IMR-90 (cell line): ENCODE measurements at regions of chr1 and their contacts with region 1.

Region 1: DNA sequence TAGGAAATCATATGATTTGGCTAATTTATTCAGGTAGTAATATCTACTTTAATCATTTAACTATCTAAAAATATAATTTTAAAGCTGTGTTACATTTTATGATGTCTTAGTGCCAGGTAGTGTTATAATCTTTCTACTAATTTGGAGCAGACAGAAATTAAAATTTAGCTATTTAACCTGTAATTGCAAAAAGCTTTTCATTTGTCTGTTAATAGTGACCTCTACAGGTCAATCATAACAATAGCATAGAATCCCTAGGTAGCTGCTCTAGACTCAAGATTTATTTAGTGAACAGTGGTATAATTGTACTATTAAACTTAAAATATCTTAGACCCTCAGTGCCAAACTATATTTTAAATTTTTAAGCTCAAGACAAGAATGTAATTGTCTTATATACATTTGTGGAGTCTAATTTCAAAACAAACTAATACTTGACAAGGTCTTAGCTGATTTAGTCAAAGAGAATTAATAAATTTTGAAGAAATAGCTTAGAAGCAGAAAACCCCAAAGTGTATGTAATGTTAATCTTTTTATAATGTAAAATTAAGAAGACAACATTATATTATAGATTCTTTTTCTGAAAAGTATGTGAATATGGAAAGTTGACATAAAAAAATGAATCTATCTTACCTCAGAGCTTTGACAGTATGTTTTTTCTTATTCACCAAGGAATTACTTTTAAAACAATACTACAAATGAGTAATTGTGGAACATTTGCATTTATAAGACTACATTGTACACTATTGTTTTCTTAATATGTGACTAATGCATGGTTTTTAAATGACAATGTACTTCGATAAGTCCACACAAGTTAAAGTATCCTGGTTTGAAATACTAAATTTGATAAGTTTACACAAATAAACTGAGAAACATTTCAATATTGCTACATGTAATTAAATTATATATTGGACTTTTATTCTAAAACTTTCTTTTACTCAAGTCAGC is 64.1 kb upstream of the RNPC3 start:
- DNase-seq: peak; percentile 16
- ATAC-seq: no peak
- H3K4me3 ChIP-seq: no peak overlapping the region
- H3K27ac ChIP-seq: no peak overlapping the region
- H3K4me1 ChIP-seq: no peaks in the 10 kb centered on the region
- H3K27me3 ChIP-seq: no peaks in the 10 kb centered on the region
- CTCF ChIP-seq: peak; percentile 63
- POLR2A ChIP-seq: no peak
- RAD21 ChIP-seq: peak; percentile 59

Region 2: DNA sequence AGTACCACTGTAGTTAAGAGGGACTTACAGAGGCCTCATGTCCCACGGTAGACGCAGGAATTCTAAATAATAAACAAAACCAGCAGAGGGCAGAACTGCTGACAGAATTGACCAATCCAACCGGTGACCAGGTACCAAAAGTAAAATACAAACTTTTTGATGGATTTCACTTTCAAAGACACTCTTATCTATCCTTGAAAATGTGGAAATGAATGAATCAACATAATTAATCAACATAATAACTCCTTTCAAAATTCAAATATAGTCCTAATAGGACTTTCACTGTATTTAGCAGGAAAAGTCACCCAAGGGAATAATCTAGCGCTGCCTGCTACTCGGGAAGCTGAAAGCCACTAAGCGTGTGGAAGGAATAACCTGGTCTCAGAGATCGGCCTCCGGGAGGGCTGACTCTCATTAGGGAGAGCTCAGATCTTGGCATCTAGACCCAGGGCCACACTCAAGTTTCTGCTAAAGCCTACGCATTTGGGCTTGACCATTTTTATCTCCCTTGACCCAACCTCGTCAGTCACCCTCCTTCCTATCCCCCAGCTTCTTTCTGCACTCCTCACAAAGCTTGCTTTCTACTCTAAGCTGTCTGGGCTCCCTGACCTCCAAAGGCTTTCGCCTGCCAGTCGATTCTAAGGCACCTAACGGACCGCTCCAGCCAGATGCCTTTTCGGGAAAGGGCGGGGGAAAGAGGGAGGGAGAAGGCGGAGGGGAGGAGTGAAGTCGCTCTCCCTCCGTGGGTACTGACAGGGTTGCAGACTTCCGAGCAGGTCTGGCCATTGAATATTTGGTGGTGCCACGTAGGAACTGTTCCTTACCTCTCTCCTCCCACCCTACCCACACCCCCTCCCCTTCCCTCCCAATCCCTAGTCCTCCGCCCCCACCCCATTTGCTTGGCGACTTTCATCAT is 354.7 kb before region 1 on chr1:
- CTCF ChIA-PET with region 1: interaction called, 15 read pairs
- POLR2A ChIA-PET with region 1: no interaction called
- dilution Hi-C with region 1: no loop called
- in situ Hi-C with region 1: no loop called
- intact Hi-C with region 1: loop called (anchors 1 kb)
- DNase-seq: peak; percentile 30
- ATAC-seq: peak; percentile 72
- H3K4me3 ChIP-seq: peak overlapping the region; percentile 55
- H3K27ac ChIP-seq: no peak overlapping the region
- H3K4me1 ChIP-seq: no peaks in the 10 kb centered on the region
- H3K27me3 ChIP-seq: peaks cover 2% of the 10 kb centered on the region
- CTCF ChIP-seq: peak; percentile 54
- POLR2A ChIP-seq: no peak
- RAD21 ChIP-seq: peak; percentile 53